Calu3 (cell line): ENCODE measurements at regions of chr14 and their contacts with region 1.

Region 1: GRCh38 chr14:22221508-22221907 is 367.5 kb downstream of the DAD1 start:
- DNase-seq: peak; percentile 14
- H3K4me3 Mint-ChIP-seq: no peak overlapping the region
- H3K27ac Mint-ChIP-seq: no peak overlapping the region
- H3K4me1 Mint-ChIP-seq: no peaks in the 10 kb centered on the region
- H3K27me3 Mint-ChIP-seq: peaks cover 40% of the 10 kb centered on the region
- CTCF ChIP-seq: no peak

Region 2: DNA sequence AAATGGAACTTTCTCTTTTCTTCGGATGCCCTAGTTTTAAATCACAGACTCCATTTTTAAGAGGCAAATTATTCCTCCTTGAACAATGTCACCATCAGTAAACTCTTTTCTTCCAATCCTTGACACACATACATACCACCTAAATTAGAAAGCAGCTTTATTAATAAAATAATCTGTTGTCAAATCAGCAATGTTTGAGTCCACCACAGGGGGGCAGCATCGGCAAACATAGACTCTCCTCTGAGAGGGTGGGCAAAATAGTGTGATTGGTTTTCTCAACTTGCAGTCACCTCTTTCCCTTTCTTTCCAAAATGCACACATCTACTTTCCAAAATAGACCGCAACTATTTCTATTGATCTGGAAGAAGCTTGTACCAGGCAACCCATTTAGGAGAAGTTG is 109.5 kb before region 1 on chr14:
- CTCF ChIA-PET with region 1: no interaction called
- intact Hi-C with region 1: no loop called
- DNase-seq: peak; percentile 49
- H3K4me3 Mint-ChIP-seq: no peak overlapping the region
- H3K27ac Mint-ChIP-seq: no peak overlapping the region
- H3K4me1 Mint-ChIP-seq: no peaks in the 10 kb centered on the region
- H3K27me3 Mint-ChIP-seq: peaks cover 31% of the 10 kb centered on the region
- CTCF ChIP-seq: peak; percentile 56

Region 3: GRCh38 chr14:22163051-22163450 is 58.5 kb before region 1 on chr14:
- CTCF ChIA-PET with region 1: interaction called, 10 read pairs
- intact Hi-C with region 1: loop called (anchors 10 kb)
- DNase-seq: no peak
- H3K4me3 Mint-ChIP-seq: no peak overlapping the region
- H3K27ac Mint-ChIP-seq: no peak overlapping the region
- H3K4me1 Mint-ChIP-seq: peaks cover 23% of the 10 kb centered on the region
- H3K27me3 Mint-ChIP-seq: no peaks in the 10 kb centered on the region
- CTCF ChIP-seq: no peak

Region 4: DNA sequence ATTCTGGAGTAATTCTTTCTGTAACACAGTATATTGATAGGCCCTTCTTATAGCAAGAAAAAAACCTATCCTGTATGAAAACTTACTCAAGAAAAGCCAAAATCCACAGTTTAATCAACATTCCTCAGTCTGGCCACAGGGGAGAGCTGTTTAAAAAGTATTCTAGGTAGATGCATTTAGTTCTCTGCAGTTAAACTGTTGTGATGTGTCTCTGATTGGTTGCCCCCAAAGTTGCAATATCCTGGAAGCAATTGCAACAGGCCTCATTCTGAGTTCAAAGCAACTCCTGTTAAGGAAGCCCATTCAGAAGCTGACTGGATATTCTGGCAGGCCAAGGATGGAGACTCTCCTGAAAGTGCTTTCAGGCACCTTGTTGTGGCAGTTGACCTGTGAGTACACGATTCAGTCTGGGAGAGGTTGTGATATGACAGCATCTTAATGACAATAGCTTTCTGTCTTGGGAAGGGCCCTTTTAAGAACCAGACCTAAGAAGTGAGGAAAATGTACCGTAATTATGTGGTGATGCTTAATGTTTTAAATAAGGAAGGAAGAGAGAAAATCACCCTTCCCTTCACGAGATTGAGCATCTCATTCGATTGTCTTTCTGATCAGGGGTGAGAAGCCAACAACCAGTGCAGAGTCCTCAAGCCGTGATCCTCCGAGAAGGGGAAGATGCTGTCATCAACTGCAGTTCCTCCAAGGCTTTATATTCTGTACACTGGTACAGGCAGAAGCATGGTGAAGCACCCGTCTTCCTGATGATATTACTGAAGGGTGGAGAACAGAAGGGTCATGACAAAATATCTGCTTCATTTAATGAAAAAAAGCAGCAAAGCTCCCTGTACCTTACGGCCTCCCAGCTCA is 53.2 kb before region 1 on chr14:
- CTCF ChIA-PET with region 1: interaction called, 10 read pairs
- intact Hi-C with region 1: loop called (anchors 10 kb)
- DNase-seq: no peak
- H3K4me3 Mint-ChIP-seq: no peak overlapping the region
- H3K27ac Mint-ChIP-seq: no peak overlapping the region
- H3K4me1 Mint-ChIP-seq: peaks cover 40% of the 10 kb centered on the region
- H3K27me3 Mint-ChIP-seq: no peaks in the 10 kb centered on the region
- CTCF ChIP-seq: no peak

Region 5: GRCh38 chr14:22200977-22201605 is 20.4 kb before region 1 on chr14:
- CTCF ChIA-PET with region 1: interaction called, 14 read pairs
- intact Hi-C with region 1: no loop called
- DNase-seq: peak; percentile 19
- H3K4me3 Mint-ChIP-seq: no peak overlapping the region
- H3K27ac Mint-ChIP-seq: no peak overlapping the region
- H3K4me1 Mint-ChIP-seq: no peaks in the 10 kb centered on the region
- H3K27me3 Mint-ChIP-seq: no peaks in the 10 kb centered on the region
- CTCF ChIP-seq: peak; percentile 46

Region 6: DNA sequence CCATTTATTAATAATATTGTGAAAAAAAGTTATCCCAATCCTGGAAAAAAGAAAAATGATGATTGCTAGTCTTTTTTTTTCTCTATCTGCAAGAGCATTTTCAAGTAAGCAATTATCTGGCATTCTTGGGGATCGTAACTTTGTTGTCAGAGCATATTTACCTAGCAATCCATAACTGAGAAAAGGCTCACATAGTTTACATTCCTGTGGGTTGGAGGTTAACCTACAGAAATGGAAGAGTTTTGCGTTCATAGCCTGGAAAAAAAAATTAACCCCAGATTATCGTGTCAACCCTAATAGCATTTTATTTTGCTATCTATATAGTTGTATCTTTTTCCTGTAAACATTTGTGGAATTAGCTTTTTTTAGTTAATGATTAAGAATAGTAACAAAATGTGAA is 75.2 kb after region 1 on chr14:
- CTCF ChIA-PET with region 1: no interaction called
- intact Hi-C with region 1: loop called (anchors 5 kb)
- DNase-seq: peak; percentile 42
- H3K4me3 Mint-ChIP-seq: no peak overlapping the region
- H3K27ac Mint-ChIP-seq: no peak overlapping the region
- H3K4me1 Mint-ChIP-seq: peaks cover 23% of the 10 kb centered on the region
- H3K27me3 Mint-ChIP-seq: peaks cover 14% of the 10 kb centered on the region
- CTCF ChIP-seq: no peak

Region 7: GRCh38 chr14:22375321-22375930 is 153.9 kb after region 1 on chr14:
- CTCF ChIA-PET with region 1: interaction called, 5 read pairs
- intact Hi-C with region 1: loop called (anchors 2 kb)
- DNase-seq: peak; percentile 50
- H3K4me3 Mint-ChIP-seq: no peak overlapping the region
- H3K27ac Mint-ChIP-seq: no peak overlapping the region
- H3K4me1 Mint-ChIP-seq: no peaks in the 10 kb centered on the region
- H3K27me3 Mint-ChIP-seq: no peaks in the 10 kb centered on the region
- CTCF ChIP-seq: no peak

Region 8: GRCh38 chr14:22472935-22473854 is 251.7 kb after region 1 on chr14:
- CTCF ChIA-PET with region 1: no interaction called
- intact Hi-C with region 1: loop called (anchors 5 kb)
- DNase-seq: peak; percentile 42
- H3K4me3 Mint-ChIP-seq: no peak overlapping the region
- H3K27ac Mint-ChIP-seq: no peak overlapping the region
- H3K4me1 Mint-ChIP-seq: peaks cover 17% of the 10 kb centered on the region
- H3K27me3 Mint-ChIP-seq: no peaks in the 10 kb centered on the region
- CTCF ChIP-seq: peak; percentile 15